ENCODE measurements at regions of chr12 and their contacts with region 1.

Region 1: GRCh38 chr12:75977952-75978671 is 53.5 kb downstream of the PHLDA1 start:
- DNase-seq: peak; percentile 88
- ATAC-seq: peak; percentile 77
- H3K4me3 Mint-ChIP-seq: peak overlapping the region; percentile 56
- H3K27ac Mint-ChIP-seq: peak overlapping the region; percentile 99
- H3K4me1 Mint-ChIP-seq: peaks cover 77% of the 10 kb centered on the region
- H3K27me3 Mint-ChIP-seq: no peaks in the 10 kb centered on the region
- CTCF ChIP-seq: no peak

Region 2: GRCh38 chr12:75908961-75909605 is 69.0 kb before region 1 on chr12:
- CTCF ChIA-PET with region 1: no interaction called
- POLR2A ChIA-PET with region 1: interaction called, 3 read pairs
- intact Hi-C with region 1: loop called (anchors 1 kb)
- DNase-seq: no peak
- ATAC-seq: no peak
- H3K4me3 Mint-ChIP-seq: no peak overlapping the region
- H3K27ac Mint-ChIP-seq: no peak overlapping the region
- H3K4me1 Mint-ChIP-seq: peaks cover 24% of the 10 kb centered on the region
- H3K27me3 Mint-ChIP-seq: peaks cover 15% of the 10 kb centered on the region
- CTCF ChIP-seq: no peak

Region 3: DNA sequence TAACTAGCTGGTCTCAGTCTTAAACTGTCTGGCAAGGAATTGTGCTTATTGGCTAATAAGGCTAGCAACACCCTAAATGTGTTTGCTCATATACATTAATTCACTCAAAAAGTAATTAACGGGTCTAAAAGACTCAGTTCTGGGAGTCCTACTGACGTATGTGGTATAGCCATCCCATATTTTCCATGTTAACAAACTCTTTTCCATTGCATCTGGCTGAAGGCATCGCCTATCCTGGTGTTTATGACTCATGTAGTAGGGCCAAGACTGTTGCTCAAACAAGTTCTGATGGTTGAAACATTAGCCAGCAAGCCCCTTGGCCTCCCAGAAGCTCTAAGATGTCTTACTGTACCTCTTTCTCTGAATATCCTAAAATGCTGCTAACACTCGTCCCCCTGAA is 45.0 kb before region 1 on chr12:
- CTCF ChIA-PET with region 1: interaction called, 4 read pairs
- POLR2A ChIA-PET with region 1: interaction called, 9 read pairs
- intact Hi-C with region 1: loop called (anchors 2 kb)
- DNase-seq: no peak
- ATAC-seq: no peak
- H3K4me3 Mint-ChIP-seq: no peak overlapping the region
- H3K27ac Mint-ChIP-seq: no peak overlapping the region
- H3K4me1 Mint-ChIP-seq: peaks cover 34% of the 10 kb centered on the region
- H3K27me3 Mint-ChIP-seq: peaks cover 3% of the 10 kb centered on the region
- CTCF ChIP-seq: no peak

Region 4: GRCh38 chr12:75944097-75944904 is 33.8 kb before region 1 on chr12:
- CTCF ChIA-PET with region 1: no interaction called
- POLR2A ChIA-PET with region 1: interaction called, 21 read pairs
- intact Hi-C with region 1: loop called (anchors 1 kb)
- DNase-seq: peak; percentile 42
- ATAC-seq: peak; percentile 88
- H3K4me3 Mint-ChIP-seq: peak overlapping the region; percentile 55
- H3K27ac Mint-ChIP-seq: peak overlapping the region; percentile 96
- H3K4me1 Mint-ChIP-seq: peaks cover 32% of the 10 kb centered on the region
- H3K27me3 Mint-ChIP-seq: no peaks in the 10 kb centered on the region
- CTCF ChIP-seq: no peak

Region 5: GRCh38 chr12:75994186-75994731 is 16.1 kb after region 1 on chr12:
- CTCF ChIA-PET with region 1: interaction called, 3 read pairs
- POLR2A ChIA-PET with region 1: interaction called, 6 read pairs
- intact Hi-C with region 1: loop called (anchors 2 kb)
- DNase-seq: peak; percentile 63
- ATAC-seq: peak; percentile 81
- H3K4me3 Mint-ChIP-seq: no peak overlapping the region
- H3K27ac Mint-ChIP-seq: peak overlapping the region; percentile 69
- H3K4me1 Mint-ChIP-seq: peaks cover 51% of the 10 kb centered on the region
- H3K27me3 Mint-ChIP-seq: peaks cover 4% of the 10 kb centered on the region
- CTCF ChIP-seq: no peak

Region 6: GRCh38 chr12:76020731-76021672 is 42.9 kb after region 1 on chr12:
- CTCF ChIA-PET with region 1: interaction called, 6 read pairs
- POLR2A ChIA-PET with region 1: interaction called, 34 read pairs
- intact Hi-C with region 1: loop called (anchors 1 kb)
- DNase-seq: peak; percentile 92
- ATAC-seq: peak; percentile 80
- H3K4me3 Mint-ChIP-seq: peak overlapping the region; percentile 54
- H3K27ac Mint-ChIP-seq: peak overlapping the region; percentile 99
- H3K4me1 Mint-ChIP-seq: peaks cover 62% of the 10 kb centered on the region
- H3K27me3 Mint-ChIP-seq: no peaks in the 10 kb centered on the region
- CTCF ChIP-seq: no peak

Measured in activated CD8-positive, alpha-beta T cell treated with anti-CD3 and anti-CD28 coated beads for 36 hours (primary cell).